ENCODE measurements at regions of chr10 and their contacts with region 1.

Region 1: DNA sequence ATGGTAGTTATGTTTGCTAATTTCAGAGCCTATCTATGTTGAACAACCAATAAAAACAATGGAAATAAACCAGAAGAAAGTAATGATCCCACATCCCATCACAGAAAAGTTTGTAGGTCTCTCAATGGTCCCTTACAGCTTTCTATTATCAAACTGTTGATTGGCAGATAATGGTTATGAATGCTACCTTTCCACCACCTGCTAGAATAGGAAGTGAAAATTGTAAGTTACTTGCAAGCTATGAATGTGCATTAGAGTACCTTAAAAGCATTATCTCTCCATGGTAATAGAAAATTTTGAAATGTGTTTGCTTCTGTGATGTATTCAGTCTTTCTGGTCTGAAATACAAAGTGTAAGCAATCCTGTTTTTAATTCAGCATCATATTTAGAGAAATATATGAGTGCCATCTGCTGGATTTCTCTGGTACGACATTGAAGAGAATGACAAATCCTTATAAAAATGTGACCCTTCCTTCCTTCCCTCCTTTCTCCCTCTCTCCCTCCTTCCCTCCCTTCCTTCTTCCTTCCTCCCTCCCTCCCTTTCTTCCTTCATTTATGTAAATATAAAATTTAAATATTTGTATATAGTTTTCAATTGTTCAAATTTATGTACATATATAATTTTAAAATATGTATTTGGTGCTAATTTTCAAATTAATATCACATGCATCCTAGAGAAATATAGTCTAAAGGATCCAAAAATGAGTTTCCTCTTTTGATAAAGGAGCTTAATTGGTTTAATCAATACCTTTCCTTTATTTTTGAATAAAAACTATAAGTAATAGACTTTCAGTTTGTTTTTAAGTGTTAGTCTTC is 41.4 kb upstream of the PNLIPRP3 start:
- DNase-seq: peak; percentile 32
- H3K4me3 ChIP-seq: no peak overlapping the region
- H3K27ac ChIP-seq: no peak overlapping the region
- H3K4me1 ChIP-seq: no peaks in the 10 kb centered on the region
- CTCF ChIP-seq: peak; percentile 80

Region 2: GRCh38 chr10:115355162-115355760 is 1030.9 kb before region 1 on chr10:
- CTCF ChIA-PET with region 1: no interaction called
- POLR2A ChIA-PET with region 1: no interaction called
- intact Hi-C with region 1: loop called (anchors 2 kb)
- DNase-seq: peak; percentile 65
- H3K4me3 ChIP-seq: no peak overlapping the region
- H3K27ac ChIP-seq: no peak overlapping the region
- H3K4me1 ChIP-seq: no peaks in the 10 kb centered on the region
- CTCF ChIP-seq: peak; percentile 88

Region 3: GRCh38 chr10:115706026-115706781 is 680.0 kb before region 1 on chr10:
- CTCF ChIA-PET with region 1: no interaction called
- POLR2A ChIA-PET with region 1: no interaction called
- intact Hi-C with region 1: loop called (anchors 2 kb)
- DNase-seq: peak; percentile 16
- H3K4me3 ChIP-seq: no peak overlapping the region
- H3K27ac ChIP-seq: no peak overlapping the region
- H3K4me1 ChIP-seq: no peaks in the 10 kb centered on the region
- CTCF ChIP-seq: peak; percentile 79

Region 4: DNA sequence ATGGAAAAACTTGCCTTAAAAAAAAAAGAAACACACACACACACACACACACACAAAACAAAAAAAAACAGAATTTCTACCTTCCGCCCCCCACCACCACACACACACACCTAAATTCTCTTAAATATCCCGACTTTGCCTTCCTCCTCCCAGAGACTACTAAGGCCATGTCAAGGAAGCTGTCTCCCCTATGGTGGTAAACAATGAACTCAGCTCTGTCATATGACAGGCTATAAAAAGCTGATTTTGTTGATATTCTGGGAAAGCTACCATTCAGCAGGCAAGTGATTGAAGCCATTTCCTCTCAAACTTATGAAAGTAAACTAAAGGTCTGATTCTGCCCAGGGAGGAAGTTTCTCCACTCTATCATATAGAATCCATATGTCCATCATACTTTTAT is 584.2 kb before region 1 on chr10:
- CTCF ChIA-PET with region 1: no interaction called
- POLR2A ChIA-PET with region 1: no interaction called
- intact Hi-C with region 1: loop called (anchors 10 kb)
- DNase-seq: no peak
- H3K4me3 ChIP-seq: no peak overlapping the region
- H3K27ac ChIP-seq: no peak overlapping the region
- H3K4me1 ChIP-seq: no peaks in the 10 kb centered on the region
- CTCF ChIP-seq: no peak

Region 5: DNA sequence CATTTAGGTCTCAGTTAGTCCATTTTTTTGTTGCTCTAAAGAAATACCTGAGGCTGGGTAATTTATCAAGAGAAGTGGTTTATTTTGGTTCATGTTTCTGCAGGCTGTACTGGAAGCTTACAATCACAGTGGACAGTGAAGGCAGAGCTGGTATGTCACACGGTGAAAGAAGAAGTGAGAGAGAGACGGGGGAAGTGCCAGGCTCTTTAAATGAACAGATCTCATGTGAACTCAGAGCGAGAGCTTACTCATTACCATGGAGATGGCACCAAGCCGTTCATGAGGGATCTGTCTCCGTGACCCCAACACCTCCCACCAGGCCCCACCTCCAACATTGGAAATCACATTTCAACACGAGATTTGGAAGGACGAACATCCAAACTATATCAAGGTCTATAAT is 22.5 kb after region 1 on chr10:
- CTCF ChIA-PET with region 1: no interaction called
- POLR2A ChIA-PET with region 1: no interaction called
- intact Hi-C with region 1: no loop called
- DNase-seq: no peak
- H3K4me3 ChIP-seq: no peak overlapping the region
- H3K27ac ChIP-seq: no peak overlapping the region
- H3K4me1 ChIP-seq: no peaks in the 10 kb centered on the region
- CTCF ChIP-seq: no peak

Measured in OCI-LY7 (cell line).